Mammary epithelial cell (primary cell): ENCODE measurements at regions of chr11 and their contacts with region 1.

Region 1: DNA sequence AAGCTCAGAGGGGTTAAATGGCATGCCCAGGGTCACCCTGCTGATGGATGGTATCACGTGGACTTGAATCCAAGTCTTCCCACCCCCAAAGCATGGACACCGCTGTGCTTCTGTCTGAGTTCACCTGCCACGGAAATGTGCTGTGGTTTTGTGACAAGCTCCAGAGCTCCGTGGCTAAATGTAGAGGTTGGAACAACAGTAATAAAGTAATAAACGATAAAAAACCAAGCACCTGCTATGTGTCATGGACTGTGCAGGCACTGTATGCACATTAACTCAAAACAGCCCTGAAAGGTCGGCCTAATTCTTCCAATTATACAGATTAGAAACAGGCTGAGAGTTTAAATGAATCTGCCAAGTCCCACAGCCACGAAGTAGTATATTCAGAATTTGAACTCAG is 182.1 kb upstream of the NAV2 start:
- DNase-seq: no peak
- H3K4me3 ChIP-seq: no peak overlapping the region
- H3K27ac ChIP-seq: no peak overlapping the region
- H3K4me1 ChIP-seq: no peaks in the 10 kb centered on the region
- H3K27me3 ChIP-seq: peaks cover 2% of the 10 kb centered on the region
- CTCF ChIP-seq: no peak

Region 2: GRCh38 chr11:19336331-19336730 is 194.2 kb before region 1 on chr11:
- CTCF ChIA-PET with region 1: no interaction called
- dilution Hi-C with region 1: loop called (anchors 5 kb)
- in situ Hi-C with region 1: no loop called
- intact Hi-C with region 1: no loop called
- DNase-seq: no peak
- H3K4me3 ChIP-seq: no peak overlapping the region
- H3K27ac ChIP-seq: no peak overlapping the region
- H3K4me1 ChIP-seq: no peaks in the 10 kb centered on the region
- H3K27me3 ChIP-seq: peaks cover 8% of the 10 kb centered on the region
- CTCF ChIP-seq: no peak

Region 3: DNA sequence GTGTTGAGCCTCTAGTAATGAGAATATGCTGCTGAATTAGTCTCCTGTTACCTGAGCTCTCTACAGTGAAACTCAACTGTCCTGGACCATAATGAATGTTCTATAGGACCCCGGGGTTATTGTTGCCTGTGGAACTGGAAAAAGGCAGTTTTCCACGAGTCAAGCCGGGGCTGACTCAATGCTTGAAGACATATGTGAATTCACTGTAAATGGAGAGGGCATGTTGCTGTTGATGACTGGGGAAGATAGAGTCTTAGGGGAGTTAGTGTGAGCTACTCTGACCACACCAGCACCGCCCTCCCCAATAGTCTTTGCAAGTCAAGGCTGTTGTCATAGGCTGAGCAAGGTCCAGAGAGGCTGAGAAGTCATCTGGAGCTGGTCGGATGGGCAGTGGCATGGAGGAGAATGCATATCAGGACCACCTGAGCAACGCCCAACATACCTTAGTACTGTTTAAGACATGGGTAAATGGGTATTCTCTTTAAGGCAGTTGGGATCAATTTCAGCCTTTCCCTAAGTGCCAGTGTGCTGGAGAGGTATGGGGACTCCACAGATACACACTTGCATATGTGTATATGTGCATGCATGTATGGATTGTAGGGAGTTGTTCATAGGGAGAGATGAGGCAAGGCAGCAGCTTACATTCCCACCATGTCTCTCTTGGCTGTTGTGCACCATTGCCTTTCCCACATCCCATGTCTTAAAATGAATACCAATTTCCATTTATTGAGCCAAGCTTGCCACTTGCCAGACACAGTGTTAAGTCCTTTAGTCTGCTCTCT is 48.0 kb before region 1 on chr11:
- CTCF ChIA-PET with region 1: no interaction called
- dilution Hi-C with region 1: no loop called
- in situ Hi-C with region 1: no loop called
- intact Hi-C with region 1: loop called (anchors 2 kb)
- DNase-seq: no peak
- H3K4me3 ChIP-seq: no peak overlapping the region
- H3K27ac ChIP-seq: no peak overlapping the region
- H3K4me1 ChIP-seq: no peaks in the 10 kb centered on the region
- H3K27me3 ChIP-seq: peaks cover 20% of the 10 kb centered on the region
- CTCF ChIP-seq: no peak

Region 4: DNA sequence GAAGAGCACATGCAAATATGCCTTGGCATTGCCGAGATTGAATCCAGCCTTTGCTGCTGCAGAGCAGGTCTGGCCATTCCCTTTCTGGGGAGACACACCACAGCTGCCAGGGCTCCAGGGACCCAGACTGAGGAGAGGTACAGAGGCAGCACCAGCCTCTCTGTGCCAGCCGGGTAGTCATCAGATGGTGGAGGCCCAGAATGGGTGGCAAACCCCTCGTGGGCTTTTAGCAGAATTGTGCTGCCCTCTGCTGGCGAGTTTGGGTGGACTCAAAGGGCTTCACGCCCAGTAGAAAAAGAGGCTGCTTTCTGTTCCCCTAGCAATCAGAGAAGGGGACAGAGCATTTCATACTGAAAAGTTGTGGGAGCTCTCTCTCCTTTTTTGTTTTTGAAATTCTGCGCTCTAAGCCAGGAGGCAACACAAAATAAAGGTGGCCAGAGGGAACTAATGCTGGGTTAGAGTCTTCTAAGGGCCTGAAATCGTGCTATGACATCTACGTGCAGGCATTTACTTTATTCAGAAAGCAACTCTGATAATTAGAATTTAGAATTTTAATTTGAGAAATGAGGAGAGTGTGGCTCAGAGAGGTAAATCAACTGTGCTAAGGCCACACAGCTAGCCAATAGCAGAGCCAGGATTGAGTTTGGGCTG is 23.3 kb after region 1 on chr11:
- CTCF ChIA-PET with region 1: no interaction called
- dilution Hi-C with region 1: no loop called
- in situ Hi-C with region 1: no loop called
- intact Hi-C with region 1: no loop called
- DNase-seq: peak; percentile 47
- H3K4me3 ChIP-seq: no peak overlapping the region
- H3K27ac ChIP-seq: no peak overlapping the region
- H3K4me1 ChIP-seq: no peaks in the 10 kb centered on the region
- H3K27me3 ChIP-seq: no peaks in the 10 kb centered on the region
- CTCF ChIP-seq: peak; percentile 79 to 89